Activated B cell treated with CpG ODN at 0.5 μM for 24 hours (primary cell): ENCODE measurements at regions of chr14 and their contacts with region 1.

Region 1: DNA sequence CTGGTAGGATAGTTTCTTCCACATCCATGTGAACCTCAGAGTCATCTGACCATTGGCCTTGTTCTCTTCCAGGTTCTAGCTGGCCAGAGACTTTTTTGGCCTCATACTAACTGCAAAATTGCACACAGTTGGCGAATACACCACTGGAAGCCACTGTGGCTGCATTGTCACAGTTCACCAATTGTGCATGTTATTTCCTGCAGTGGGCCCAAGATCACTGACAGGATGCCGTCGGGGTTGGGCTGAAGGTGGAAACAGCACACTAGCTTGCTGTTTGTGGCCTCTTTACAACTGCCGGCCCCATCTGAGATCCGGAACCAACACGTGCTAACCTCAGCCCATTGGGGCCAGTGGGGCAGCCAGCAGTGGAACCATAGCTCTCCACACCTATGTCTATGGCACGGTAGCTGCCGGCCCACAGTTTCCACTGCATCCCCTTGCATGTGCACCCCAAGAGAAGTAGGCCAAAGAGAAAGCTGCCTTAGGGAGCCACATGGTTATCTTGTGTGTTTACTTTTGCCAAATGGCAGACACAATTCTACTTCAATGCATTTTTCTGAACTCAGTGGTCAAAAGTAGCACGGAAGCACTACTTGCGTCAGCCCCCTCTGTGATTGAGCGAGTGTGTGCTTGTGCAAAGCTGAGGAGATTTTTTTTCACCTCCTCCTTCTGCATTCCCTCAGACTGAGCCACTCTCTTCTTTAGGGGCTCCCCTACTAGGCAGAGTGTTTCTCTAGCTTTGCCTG is 464.0 kb downstream of the RAD51B start:
- DNase-seq: peak; percentile 61
- ATAC-seq: peak; percentile 60
- H3K4me3 Mint-ChIP-seq: peak overlapping the region; percentile 58
- H3K27ac Mint-ChIP-seq: peak overlapping the region; percentile 99
- H3K4me1 Mint-ChIP-seq: peaks cover 97% of the 10 kb centered on the region
- H3K27me3 Mint-ChIP-seq: no peaks in the 10 kb centered on the region
- CTCF ChIP-seq: no peak

Region 2: DNA sequence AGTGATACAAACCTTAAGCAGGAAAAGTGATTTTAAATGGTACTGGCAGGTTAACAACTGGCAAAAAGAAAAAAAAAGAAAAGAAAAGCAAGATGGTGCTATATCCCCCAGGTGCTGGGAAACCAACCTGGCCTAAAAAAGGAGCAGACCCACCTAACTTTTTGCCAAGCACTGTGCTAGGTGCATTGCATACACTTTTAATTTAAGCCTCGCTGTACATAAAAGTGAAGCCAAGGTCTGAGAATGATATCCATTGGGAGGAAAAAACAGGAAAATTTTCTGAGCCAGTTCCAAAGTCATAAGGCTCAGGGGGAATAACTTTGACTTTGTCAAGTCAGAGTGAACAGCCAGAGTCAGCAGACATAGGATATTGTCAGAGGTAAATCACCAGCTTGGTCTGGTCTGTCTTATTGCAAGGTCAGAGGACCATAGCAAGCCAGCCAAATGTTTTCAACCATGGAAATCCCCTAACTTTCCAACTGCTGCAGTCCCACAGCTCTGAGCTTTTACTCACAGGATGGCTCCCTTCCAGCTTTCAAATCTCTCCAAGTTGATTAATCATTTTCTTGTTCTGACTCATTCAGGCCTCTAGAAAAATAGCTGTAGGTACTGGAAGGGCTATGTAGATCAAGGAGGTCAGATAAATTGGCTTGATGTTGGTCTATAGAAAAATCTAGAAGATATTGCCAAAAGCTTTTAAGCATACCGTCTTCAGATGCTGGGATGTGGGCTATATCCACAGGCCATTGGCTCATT is 51.1 kb before region 1 on chr14:
- CTCF ChIA-PET with region 1: no interaction called
- POLR2A ChIA-PET with region 1: no interaction called
- intact Hi-C with region 1: no loop called
- DNase-seq: no peak
- ATAC-seq: peak; percentile 91
- H3K4me3 Mint-ChIP-seq: no peak overlapping the region
- H3K27ac Mint-ChIP-seq: no peak overlapping the region
- H3K4me1 Mint-ChIP-seq: peaks cover 2% of the 10 kb centered on the region
- H3K27me3 Mint-ChIP-seq: no peaks in the 10 kb centered on the region
- CTCF ChIP-seq: no peak

Region 3: DNA sequence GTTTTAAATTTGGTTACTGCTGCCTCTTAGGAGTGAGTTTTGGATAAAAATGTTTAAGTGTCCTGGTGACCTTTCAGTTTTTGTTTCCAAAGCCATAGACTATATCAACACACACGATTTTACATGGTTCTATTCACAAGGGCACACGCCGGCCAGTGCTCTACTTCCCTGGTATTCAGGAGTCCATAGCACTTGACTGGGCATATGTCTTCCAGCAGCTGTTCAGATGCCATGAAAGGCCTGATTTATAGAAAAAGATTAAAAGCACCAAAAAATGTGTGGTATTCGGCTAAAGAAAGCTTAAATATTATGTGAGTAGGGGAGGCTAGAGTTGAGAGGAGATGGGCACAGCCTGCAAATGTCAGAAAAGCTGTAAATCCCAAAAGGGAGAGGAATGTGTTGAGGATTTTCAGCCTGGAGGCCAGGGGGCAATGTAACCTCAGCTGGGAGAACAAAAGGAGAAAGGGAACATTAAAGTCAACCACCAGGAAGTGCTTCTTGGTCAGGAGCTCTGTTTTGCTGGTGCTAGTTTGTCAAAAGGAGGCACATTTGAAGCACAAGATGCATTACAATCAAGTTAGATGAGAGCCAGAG is 14.4 kb after region 1 on chr14:
- CTCF ChIA-PET with region 1: interaction called, 8 read pairs
- POLR2A ChIA-PET with region 1: interaction called, 55 read pairs
- intact Hi-C with region 1: loop called (anchors 1 kb)
- DNase-seq: no peak
- ATAC-seq: no peak
- H3K4me3 Mint-ChIP-seq: no peak overlapping the region
- H3K27ac Mint-ChIP-seq: peak overlapping the region; percentile 75
- H3K4me1 Mint-ChIP-seq: peaks cover 59% of the 10 kb centered on the region
- H3K27me3 Mint-ChIP-seq: no peaks in the 10 kb centered on the region
- CTCF ChIP-seq: no peak

Region 4: DNA sequence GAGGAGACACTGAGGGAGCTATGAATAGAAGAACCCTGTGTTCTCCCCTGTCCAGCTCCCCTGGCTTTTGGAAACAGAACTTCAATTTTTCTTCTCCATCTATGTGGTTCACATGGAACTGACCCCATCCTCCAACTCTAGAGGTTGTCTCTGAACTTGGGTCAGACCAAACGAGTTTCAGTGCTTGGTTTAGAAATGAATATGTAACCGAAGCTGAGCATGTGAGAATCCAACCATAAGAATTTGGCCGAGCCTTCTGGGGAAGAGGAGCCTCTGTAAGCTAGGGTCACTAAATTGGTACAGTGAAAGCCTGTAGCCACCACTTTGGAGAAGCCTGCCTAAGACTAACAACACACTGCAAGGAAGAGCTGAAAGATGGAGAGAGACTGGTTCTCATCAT is 45.0 kb after region 1 on chr14:
- CTCF ChIA-PET with region 1: interaction called, 4 read pairs
- POLR2A ChIA-PET with region 1: interaction called, 9 read pairs
- intact Hi-C with region 1: loop called (anchors 5 kb)
- DNase-seq: no peak
- ATAC-seq: no peak
- H3K4me3 Mint-ChIP-seq: no peak overlapping the region
- H3K27ac Mint-ChIP-seq: peak overlapping the region; percentile 13
- H3K4me1 Mint-ChIP-seq: peaks cover 63% of the 10 kb centered on the region
- H3K27me3 Mint-ChIP-seq: no peaks in the 10 kb centered on the region
- CTCF ChIP-seq: no peak

Region 5: DNA sequence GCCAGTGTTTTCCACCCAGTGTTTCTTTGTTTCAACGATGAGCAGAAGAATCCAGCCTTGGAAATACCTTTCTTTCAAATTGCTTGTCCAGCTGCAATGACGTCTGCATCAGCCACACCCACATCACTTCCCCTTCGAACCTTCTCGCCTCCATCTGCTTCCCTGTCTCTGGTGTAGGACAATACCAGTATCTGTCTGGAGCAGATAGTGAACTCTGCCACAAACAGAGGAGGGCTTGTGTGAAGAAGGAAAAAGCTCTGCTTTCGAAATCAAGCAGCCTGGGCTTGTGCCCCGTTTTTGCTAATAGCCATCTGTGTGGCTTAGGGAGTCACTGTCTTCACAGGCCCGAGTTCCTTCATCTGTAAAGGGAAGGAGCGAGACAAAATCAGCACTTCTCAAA is 93.9 kb after region 1 on chr14:
- CTCF ChIA-PET with region 1: interaction called, 3 read pairs
- POLR2A ChIA-PET with region 1: interaction called, 26 read pairs
- intact Hi-C with region 1: no loop called
- DNase-seq: no peak
- ATAC-seq: peak; percentile 43
- H3K4me3 Mint-ChIP-seq: peak overlapping the region; percentile 50
- H3K27ac Mint-ChIP-seq: peak overlapping the region; percentile 83
- H3K4me1 Mint-ChIP-seq: peaks cover 69% of the 10 kb centered on the region
- H3K27me3 Mint-ChIP-seq: no peaks in the 10 kb centered on the region
- CTCF ChIP-seq: no peak

Region 6: GRCh38 chr14:68476212-68476907 is 192.8 kb after region 1 on chr14:
- CTCF ChIA-PET with region 1: interaction called, 6 read pairs
- POLR2A ChIA-PET with region 1: interaction called, 19 read pairs
- intact Hi-C with region 1: loop called (anchors 5 kb)
- DNase-seq: peak; percentile 40
- ATAC-seq: peak; percentile 83
- H3K4me3 Mint-ChIP-seq: peak overlapping the region; percentile 62
- H3K27ac Mint-ChIP-seq: peak overlapping the region; percentile 99
- H3K4me1 Mint-ChIP-seq: peaks cover 89% of the 10 kb centered on the region
- H3K27me3 Mint-ChIP-seq: no peaks in the 10 kb centered on the region
- CTCF ChIP-seq: no peak

Region 7: DNA sequence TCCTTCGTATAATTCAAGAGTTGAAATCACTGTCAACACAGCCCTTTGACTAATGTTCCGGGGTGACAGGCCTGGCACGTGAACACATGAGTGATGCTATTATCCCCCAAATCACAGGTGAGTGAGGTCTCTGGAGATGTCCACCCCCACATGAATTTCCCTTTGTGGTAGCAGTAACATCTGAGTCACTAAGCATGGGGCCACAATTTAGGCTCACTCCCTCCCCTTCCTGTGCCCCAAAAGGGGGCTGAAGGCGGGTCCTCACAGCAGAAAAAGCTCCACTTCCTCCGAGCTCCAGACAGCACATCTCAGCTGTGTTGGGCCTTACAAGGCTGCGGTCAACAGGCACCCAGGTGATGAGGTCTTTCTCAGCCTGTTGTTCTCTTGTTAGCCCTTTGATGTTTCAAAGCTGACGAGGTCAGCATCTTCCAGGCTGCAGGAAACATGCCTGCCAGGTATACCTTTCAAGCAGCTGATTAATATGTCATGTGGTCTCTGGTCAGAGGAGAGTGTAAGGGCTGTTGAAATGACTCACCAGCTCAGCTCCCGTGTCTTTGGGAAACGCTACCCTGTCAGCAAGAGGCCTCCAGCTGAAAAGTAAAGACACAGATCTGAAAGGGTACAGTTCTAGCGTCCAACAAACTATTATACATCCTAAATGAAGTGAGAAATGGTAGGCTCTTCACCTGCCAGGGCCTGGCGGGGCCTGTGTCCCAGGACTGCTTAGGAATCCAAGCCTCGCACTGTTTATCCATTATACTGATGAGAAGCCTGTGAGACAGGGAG is 402.1 kb after region 1 on chr14:
- CTCF ChIA-PET with region 1: interaction called, 4 read pairs
- POLR2A ChIA-PET with region 1: interaction called, 45 read pairs
- intact Hi-C with region 1: loop called (anchors 2 kb)
- DNase-seq: peak; percentile 65
- ATAC-seq: peak; percentile 76
- H3K4me3 Mint-ChIP-seq: peak overlapping the region; percentile 73
- H3K27ac Mint-ChIP-seq: peak overlapping the region; percentile 97
- H3K4me1 Mint-ChIP-seq: peaks cover 87% of the 10 kb centered on the region
- H3K27me3 Mint-ChIP-seq: no peaks in the 10 kb centered on the region
- CTCF ChIP-seq: no peak